B cell (primary cell): ENCODE measurements at regions of chr4 and their contacts with region 1.

Region 1: DNA sequence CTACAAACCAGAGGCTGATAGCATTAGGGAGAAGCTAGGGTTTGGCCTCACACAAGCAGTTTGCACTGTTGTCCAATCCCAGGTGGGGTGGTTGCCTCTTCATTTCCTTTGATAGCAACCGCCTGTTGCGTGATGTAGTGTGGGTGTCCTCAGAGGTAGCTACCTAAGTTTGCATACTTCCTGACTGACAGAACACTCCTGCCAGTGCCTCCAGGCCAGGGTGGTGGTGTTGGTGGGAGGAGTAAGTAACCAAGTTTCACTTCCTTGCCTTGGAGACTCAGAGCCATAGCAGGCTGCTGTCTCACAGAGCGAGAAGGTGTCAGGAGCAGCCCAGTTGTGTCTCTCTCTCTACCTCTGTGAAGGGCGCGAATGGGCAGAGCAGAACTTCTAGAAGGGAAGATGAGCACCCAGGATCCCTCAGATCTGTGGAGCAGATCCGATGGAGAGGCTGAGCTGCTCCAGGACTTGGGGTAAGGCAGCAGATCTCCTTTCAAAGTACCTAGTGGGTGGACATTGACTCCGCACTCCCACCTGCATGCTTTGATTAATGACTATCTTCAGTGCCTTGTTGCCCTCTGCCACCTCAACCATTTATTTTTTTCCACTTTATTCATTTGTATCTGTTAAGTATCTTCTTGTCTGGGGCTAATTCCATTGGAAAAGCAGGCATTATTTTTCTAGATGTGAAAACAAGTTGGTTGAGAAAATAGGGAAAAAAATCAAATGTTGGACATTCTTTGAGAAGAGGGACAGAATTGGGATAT is at the start of gene DAPP1:
- DNase-seq: peak; percentile 94
- ATAC-seq: peak; percentile 94
- H3K4me3 ChIP-seq: peak within 1 kb of the TSS; percentile 60 to 100 (median 91)
- H3K4me3 Mint-ChIP-seq: peak within 1 kb of the TSS; percentile 95
- H3K27ac ChIP-seq: peak within 1 kb of the TSS; percentile 77 to 95
- H3K27ac Mint-ChIP-seq: peak within 1 kb of the TSS; percentile 90
- H3K4me1 ChIP-seq: peaks cover 50 to 57% of the 10 kb centered on the region in 2 donors
- H3K4me1 Mint-ChIP-seq: peaks cover 58% of the 10 kb centered on the region
- H3K27me3 ChIP-seq: no peaks in the 10 kb centered on the region
- H3K27me3 Mint-ChIP-seq: no peaks in the 10 kb centered on the region
- CTCF ChIP-seq: no peak
- total RNA-seq, gene DAPP1: 166 and 169 TPM in 2 replicates

Region 2: DNA sequence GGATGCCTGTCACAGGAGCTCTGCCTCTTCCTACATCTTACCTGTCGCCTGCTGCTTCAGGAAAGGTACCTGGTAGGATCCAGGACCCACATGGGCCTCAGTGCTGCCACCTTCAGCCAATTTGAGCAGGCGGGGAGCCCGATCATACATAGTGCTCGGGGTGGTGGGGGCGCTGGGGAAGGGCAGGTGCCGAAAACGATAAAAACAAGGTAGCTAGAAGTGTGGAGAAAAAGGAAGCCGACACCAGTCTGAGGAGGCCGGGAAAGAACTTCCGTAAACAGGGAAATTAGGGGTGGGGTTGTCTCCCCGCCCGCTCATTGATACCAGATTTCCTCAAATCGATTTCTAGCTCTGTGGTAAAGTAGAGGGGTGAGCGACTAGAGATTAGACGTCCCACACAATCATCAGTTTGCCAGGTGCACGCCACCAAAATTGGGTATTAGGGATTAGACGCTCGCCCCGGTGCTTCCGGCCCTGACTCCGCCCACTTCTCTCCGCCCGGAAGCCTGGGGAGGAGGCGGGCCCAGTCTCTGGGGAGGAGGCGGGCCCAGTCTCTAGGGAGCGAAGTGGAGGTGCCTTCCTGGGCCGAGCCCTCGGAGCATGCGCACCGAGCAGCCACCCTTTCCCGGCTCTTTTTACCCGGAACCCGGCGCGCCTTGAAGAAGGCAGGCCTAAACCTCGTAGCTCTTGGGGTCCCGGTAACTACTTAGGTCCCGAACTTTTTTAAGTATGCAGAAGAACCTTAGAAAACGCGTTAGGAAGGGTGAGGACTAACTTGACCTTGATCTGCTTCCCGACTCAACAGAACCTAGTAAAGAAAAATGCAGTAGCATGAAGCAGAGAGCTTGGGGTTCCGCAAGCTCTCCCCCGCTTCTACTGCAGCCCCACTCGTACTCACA is 1673.5 kb before region 1 on chr4 and contains the start of gene STPG2:
- CTCF ChIA-PET with region 1: no interaction called
- POLR2A ChIA-PET with region 1: no interaction called
- intact Hi-C with region 1: loop called (anchors 2 kb)
- DNase-seq: peak; percentile 97
- ATAC-seq: peak; percentile 98
- H3K4me3 ChIP-seq: peak within 1 kb of the TSS; percentile 69 to 86 (median 84)
- H3K4me3 Mint-ChIP-seq: peak within 1 kb of the TSS; percentile 94
- H3K27ac ChIP-seq: peak within 1 kb of the TSS; percentile 91 to 93
- H3K27ac Mint-ChIP-seq: peak within 1 kb of the TSS; percentile 96
- H3K4me1 ChIP-seq: peaks cover 15 to 18% of the 10 kb centered on the region in 2 donors
- H3K4me1 Mint-ChIP-seq: peaks cover 24% of the 10 kb centered on the region
- H3K27me3 ChIP-seq: no peaks in the 10 kb centered on the region
- H3K27me3 Mint-ChIP-seq: no peaks in the 10 kb centered on the region
- CTCF ChIP-seq: peak; percentile 77
- total RNA-seq, gene STPG2: 0.41 and 0.49 TPM in 2 replicates

Region 3: GRCh38 chr4:98928505-98929340 is 888.0 kb before region 1 on chr4 and contains the start of gene EIF4E:
- CTCF ChIA-PET with region 1: no interaction called
- POLR2A ChIA-PET with region 1: no interaction called
- intact Hi-C with region 1: loop called (anchors 10 kb)
- DNase-seq: peak; percentile 99
- ATAC-seq: peak; percentile 77
- H3K4me3 ChIP-seq: peak within 1 kb of the TSS; percentile 95 to 100 (median 98)
- H3K4me3 Mint-ChIP-seq: peak within 1 kb of the TSS; percentile 99
- H3K27ac ChIP-seq: peak within 1 kb of the TSS; percentile 91 to 93
- H3K27ac Mint-ChIP-seq: peak within 1 kb of the TSS; percentile 99
- H3K4me1 ChIP-seq: peaks cover 31 to 32% of the 10 kb centered on the region in 2 donors
- H3K4me1 Mint-ChIP-seq: peaks cover 50% of the 10 kb centered on the region
- H3K27me3 ChIP-seq: no peaks in the 10 kb centered on the region
- H3K27me3 Mint-ChIP-seq: no peaks in the 10 kb centered on the region
- CTCF ChIP-seq: peak; percentile 67
- total RNA-seq, gene EIF4E: 71.1 and 71.2 TPM in 2 replicates

Region 4: GRCh38 chr4:99529228-99529627 is 287.5 kb before region 1 on chr4:
- CTCF ChIA-PET with region 1: no interaction called
- POLR2A ChIA-PET with region 1: no interaction called
- intact Hi-C with region 1: no loop called
- DNase-seq: no peak
- ATAC-seq: no peak
- H3K4me3 ChIP-seq: no peak overlapping the region
- H3K4me3 Mint-ChIP-seq: no peak overlapping the region
- H3K27ac ChIP-seq: no peak overlapping the region
- H3K27ac Mint-ChIP-seq: no peak overlapping the region
- H3K4me1 ChIP-seq: no peaks in the 10 kb centered on the region
- H3K4me1 Mint-ChIP-seq: no peaks in the 10 kb centered on the region
- H3K27me3 ChIP-seq: peaks cover 0 to 22% (median 0%) of the 10 kb centered on the region in 4 experiments
- H3K27me3 Mint-ChIP-seq: peaks cover 34% of the 10 kb centered on the region
- CTCF ChIP-seq: no peak

Region 5: GRCh38 chr4:99563310-99564186 is 253.2 kb before region 1 on chr4 and contains the start of gene TRMT10A:
- CTCF ChIA-PET with region 1: interaction called, 10 read pairs
- POLR2A ChIA-PET with region 1: interaction called, 5 read pairs
- intact Hi-C with region 1: loop called (anchors 1 kb)
- DNase-seq: peak; percentile 98
- ATAC-seq: peak; percentile 84
- H3K4me3 ChIP-seq: peak within 1 kb of the TSS; percentile 73 to 92 (median 80)
- H3K4me3 Mint-ChIP-seq: peak within 1 kb of the TSS; percentile 99
- H3K27ac ChIP-seq: peak within 1 kb of the TSS; percentile 96
- H3K27ac Mint-ChIP-seq: peak within 1 kb of the TSS; percentile 100
- H3K4me1 ChIP-seq: peaks cover 4 to 9% of the 10 kb centered on the region in 2 donors
- H3K4me1 Mint-ChIP-seq: peaks cover 18% of the 10 kb centered on the region
- H3K27me3 ChIP-seq: peaks cover 0 to 9% (median 2%) of the 10 kb centered on the region in 4 experiments
- H3K27me3 Mint-ChIP-seq: peaks cover 24% of the 10 kb centered on the region
- CTCF ChIP-seq: no peak
- total RNA-seq, gene TRMT10A: 4.5 and 5.5 TPM in 2 replicates

Region 6: DNA sequence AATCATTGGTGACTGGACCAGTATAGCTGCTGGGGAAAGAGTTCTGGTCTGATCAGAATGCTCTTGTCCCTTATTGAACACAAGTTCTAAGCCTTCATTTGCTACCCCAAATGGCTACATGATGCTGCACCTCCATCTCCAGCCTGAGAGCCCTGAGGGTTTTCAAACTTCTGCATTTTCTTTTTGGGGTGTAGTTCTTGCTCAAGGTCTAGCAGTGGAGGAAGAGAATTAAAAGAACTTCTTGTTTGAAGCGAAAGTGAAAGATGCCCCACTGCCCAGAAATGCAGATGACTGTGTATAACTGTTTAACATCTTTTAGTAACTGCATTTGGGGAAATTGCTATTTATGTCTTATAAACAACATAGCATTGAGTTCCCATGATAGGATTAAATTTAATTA is 39.0 kb after region 1 on chr4:
- CTCF ChIA-PET with region 1: interaction called, 34 read pairs
- POLR2A ChIA-PET with region 1: interaction called, 5 read pairs
- intact Hi-C with region 1: loop called (anchors 1 kb)
- DNase-seq: peak; percentile 78
- ATAC-seq: peak; percentile 75
- H3K4me3 ChIP-seq: peak overlapping the region in 1 of 5 experiments; percentile 5
- H3K4me3 Mint-ChIP-seq: peak overlapping the region; percentile 11
- H3K27ac ChIP-seq: peak overlapping the region; percentile 31 to 84
- H3K27ac Mint-ChIP-seq: peak overlapping the region; percentile 64
- H3K4me1 ChIP-seq: peaks cover 46 to 51% of the 10 kb centered on the region in 2 donors
- H3K4me1 Mint-ChIP-seq: peaks cover 69% of the 10 kb centered on the region
- H3K27me3 ChIP-seq: no peaks in the 10 kb centered on the region
- H3K27me3 Mint-ChIP-seq: no peaks in the 10 kb centered on the region
- CTCF ChIP-seq: no peak

Region 7: DNA sequence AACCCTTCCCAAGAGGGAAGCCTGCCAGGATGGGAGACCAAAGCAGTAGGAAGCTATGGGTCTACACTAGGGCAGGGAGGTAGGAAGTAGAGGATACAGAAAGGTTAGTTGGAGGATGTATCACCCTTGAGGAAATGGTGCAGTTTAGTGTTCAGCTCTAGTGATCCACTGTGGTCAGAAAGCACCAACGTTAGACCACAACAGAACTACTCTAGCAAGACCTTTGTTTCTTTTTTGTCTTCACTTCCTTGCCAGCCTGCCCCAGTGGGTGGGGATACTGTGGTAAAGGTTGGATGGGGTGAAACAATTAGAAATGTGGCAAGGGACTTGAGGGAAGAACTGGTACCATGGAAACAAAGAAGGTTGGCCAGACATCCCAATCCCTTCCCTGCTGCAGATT is 290.3 kb after region 1 on chr4:
- CTCF ChIA-PET with region 1: no interaction called
- POLR2A ChIA-PET with region 1: no interaction called
- intact Hi-C with region 1: loop called (anchors 10 kb)
- DNase-seq: peak; percentile 84
- ATAC-seq: peak; percentile 96
- H3K4me3 ChIP-seq: peak overlapping the region in 2 of 5 experiments; percentile 2 to 19
- H3K4me3 Mint-ChIP-seq: peak overlapping the region; percentile 51
- H3K27ac ChIP-seq: no peak overlapping the region
- H3K27ac Mint-ChIP-seq: peak overlapping the region; percentile 51
- H3K4me1 ChIP-seq: peaks cover 18 to 31% of the 10 kb centered on the region in 2 donors
- H3K4me1 Mint-ChIP-seq: peaks cover 40% of the 10 kb centered on the region
- H3K27me3 ChIP-seq: no peaks in the 10 kb centered on the region
- H3K27me3 Mint-ChIP-seq: no peaks in the 10 kb centered on the region
- CTCF ChIP-seq: no peak